Activated CD4-positive, alpha-beta memory T cell treated with anti-CD3 and anti-CD28 coated beads, Interleukin-2, amount 10 ng/mL, durations not matched to agents 7 days and 5 days (primary cell): ENCODE measurements at regions of chr16 and their contacts with region 1.

Region 1: DNA sequence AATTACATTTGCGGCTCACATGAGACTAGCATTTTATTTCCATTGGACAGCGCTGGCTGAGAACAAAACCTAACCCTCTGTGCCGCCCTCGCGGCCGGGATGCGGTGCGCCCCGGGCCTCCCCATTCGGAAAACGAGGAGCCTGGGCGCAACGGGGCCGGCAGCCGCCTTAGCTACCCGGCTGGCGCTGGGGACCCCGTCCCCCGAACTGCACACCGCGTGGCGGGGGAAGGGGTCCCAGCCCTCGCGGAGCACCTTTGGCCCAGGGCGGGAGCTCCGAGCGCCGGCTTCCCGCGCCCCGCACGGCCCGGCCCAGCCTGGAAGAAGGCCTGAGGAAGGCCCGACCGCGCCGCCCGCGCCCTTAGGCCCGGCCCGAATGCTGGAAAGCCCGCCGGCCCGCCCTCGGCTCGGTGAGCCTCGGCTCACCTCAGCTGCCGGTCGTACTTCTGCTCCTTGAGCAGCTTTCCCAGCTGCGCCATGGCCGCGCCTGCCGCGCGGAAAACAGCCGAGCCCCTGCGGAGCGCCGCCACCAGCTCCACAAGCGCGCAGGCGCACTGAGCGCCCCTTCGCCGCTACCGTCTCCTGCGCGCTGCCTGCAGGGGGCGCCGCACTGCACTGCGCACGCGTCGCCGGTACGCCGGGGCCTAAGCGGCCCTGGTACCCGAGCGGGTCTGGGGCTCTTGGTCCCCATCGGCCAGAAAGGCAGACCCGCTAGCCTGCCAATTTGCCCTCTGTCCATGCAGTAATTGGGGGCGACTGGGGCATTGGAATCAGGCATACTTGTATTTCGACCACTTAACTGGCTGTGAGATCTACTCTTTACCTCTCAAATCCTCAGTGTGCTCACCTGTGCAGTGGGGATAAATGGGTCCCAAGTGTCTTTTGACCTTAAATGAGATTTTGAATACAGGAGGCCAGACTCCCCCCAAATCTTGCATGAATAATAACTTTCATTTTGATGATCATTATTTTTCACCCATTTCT is at the start of gene NAE1:
- DNase-seq: peak; percentile 90
- H3K4me3 Mint-ChIP-seq: peak within 1 kb of the TSS; percentile 73
- H3K27ac Mint-ChIP-seq: peak within 1 kb of the TSS; percentile 63
- H3K4me1 Mint-ChIP-seq: peaks cover 41% of the 10 kb centered on the region
- H3K27me3 Mint-ChIP-seq: no peaks in the 10 kb centered on the region
- total RNA-seq, gene NAE1: 76.5 to 78.2 TPM

Region 2: DNA sequence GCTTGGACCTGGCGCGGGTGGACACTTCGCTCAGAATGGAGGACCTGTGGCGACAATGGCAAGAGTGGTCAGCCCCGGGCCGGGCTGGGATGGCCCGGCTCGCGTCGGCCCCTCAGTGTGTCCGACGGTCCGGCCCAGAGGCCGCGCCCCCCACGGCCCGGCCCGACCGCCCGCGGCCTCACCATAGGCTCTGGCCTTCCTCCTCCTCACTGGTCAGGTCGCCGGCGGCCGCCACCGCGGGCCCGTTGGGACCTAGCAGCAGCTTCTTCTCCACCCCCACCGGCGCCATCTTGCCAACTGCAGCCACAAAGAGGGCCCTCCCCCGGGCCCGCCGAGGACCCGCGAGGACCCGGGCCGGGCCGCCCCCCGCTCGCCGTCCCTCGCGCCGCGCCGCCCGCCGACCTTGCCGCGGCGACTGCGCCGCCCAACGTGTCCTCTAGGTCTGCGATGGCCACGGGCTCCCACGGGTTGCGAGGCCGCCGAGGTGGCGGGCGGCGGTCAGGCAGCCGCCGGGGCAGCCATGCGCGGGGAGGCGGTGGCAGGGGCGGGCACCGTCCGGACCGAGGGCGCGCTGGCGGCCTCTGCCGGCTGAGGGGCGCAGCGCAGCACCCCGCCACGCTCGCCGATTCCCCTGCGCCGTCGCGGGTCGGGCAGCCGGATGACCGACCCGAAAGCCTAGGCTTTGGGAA is 79.3 kb before region 1 on chr16 and contains the start of gene DYNC1LI2:
- CTCF ChIA-PET with region 1: interaction called, 17 read pairs
- POLR2A ChIA-PET with region 1: interaction called, 8 read pairs
- DNase-seq: peak; percentile 82
- H3K4me3 Mint-ChIP-seq: peak within 1 kb of the TSS; percentile 81
- H3K27ac Mint-ChIP-seq: peak within 1 kb of the TSS; percentile 73
- H3K4me1 Mint-ChIP-seq: peaks cover 42% of the 10 kb centered on the region
- H3K27me3 Mint-ChIP-seq: peaks cover 15% of the 10 kb centered on the region
- total RNA-seq, gene DYNC1LI2: 50.1 to 52.9 TPM

Region 3: GRCh38 chr16:66810391-66810790 is 20.3 kb before region 1 on chr16:
- CTCF ChIA-PET with region 1: interaction called, 38 read pairs
- POLR2A ChIA-PET with region 1: interaction called, 3 read pairs
- DNase-seq: no peak
- H3K4me3 Mint-ChIP-seq: no peak overlapping the region
- H3K27ac Mint-ChIP-seq: no peak overlapping the region
- H3K4me1 Mint-ChIP-seq: no peaks in the 10 kb centered on the region
- H3K27me3 Mint-ChIP-seq: no peaks in the 10 kb centered on the region

Region 4: DNA sequence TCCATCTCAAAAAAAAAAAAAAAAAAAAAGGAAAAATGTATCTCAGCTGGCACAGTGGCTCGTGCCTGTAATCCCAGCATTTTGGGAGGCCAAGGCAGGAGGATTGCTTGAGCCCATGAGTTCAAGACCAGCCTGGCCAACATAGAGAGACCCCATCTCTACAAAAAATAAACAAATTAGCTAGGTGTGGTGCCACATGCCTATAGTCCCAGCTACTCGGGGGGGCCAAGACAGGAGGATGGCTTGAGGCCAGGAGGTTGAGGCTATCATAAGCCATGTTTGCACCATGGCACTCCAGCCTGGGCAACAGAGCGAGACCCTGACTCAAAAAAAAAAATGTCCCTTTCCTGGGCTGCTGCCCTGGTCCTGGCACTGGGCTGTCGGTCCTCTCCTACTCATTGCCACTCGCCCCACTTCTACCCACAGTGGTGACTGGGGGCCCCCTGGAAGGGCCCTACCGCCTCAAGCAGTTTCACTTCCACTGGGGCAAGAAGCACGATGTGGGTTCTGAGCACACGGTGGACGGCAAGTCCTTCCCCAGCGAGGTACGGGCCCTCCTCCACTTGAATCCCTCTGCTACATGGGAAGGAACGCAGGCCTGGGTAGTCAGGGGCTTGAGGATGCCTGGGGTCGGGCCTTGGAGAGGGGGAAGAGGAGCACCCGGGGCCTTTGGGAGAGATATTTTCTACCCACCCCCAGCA is 19.6 kb after region 1 on chr16:
- CTCF ChIA-PET with region 1: interaction called, 19 read pairs
- POLR2A ChIA-PET with region 1: no interaction called
- DNase-seq: no peak
- H3K4me3 Mint-ChIP-seq: no peak overlapping the region
- H3K27ac Mint-ChIP-seq: no peak overlapping the region
- H3K4me1 Mint-ChIP-seq: peaks cover 16% of the 10 kb centered on the region
- H3K27me3 Mint-ChIP-seq: peaks cover 13% of the 10 kb centered on the region

Region 5: GRCh38 chr16:66872943-66873684 is 42.4 kb after region 1 on chr16:
- CTCF ChIA-PET with region 1: interaction called, 125 read pairs
- POLR2A ChIA-PET with region 1: interaction called, 37 read pairs
- DNase-seq: peak; percentile 96
- H3K4me3 Mint-ChIP-seq: peak overlapping the region; percentile 72
- H3K27ac Mint-ChIP-seq: peak overlapping the region; percentile 82
- H3K4me1 Mint-ChIP-seq: peaks cover 50% of the 10 kb centered on the region
- H3K27me3 Mint-ChIP-seq: no peaks in the 10 kb centered on the region

Region 6: DNA sequence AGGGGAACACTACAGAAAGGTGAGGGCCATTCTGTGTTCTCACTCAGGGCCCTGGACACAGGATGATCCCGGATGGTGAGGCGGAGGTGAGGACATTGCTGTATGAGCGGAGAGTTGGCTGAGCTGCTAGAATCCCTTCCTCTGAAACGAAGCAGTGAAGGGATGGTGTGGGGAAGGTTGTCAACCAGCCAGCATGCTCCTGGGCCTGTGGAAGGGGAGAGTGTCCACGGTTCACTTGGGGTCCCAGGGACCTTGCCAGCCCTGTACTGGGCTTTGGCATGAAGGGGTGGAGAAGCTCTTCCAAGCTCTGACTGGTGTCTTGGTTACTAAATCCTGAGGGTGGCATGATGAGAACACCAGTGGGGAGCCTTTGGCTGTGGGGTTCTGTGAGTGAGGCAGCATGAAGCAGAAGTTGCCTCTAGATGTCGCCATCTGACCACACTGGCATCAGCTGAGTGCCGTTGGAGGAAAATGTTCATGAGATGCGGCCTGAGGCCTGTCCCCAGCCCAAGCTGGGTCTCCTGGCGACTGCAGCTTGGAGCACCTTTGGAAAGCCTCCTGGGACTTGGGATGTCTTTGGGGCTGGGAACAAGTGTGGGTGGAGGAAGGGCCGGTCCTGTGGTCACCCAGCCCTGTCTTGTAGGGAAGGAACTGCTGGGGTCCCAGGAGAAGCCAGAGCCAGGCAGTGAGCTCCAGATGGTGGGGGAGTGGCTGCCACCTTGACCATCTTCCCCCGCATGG is 64.4 kb after region 1 on chr16:
- CTCF ChIA-PET with region 1: interaction called, 10 read pairs
- POLR2A ChIA-PET with region 1: no interaction called
- DNase-seq: peak; percentile 76
- H3K4me3 Mint-ChIP-seq: no peak overlapping the region
- H3K27ac Mint-ChIP-seq: no peak overlapping the region
- H3K4me1 Mint-ChIP-seq: peaks cover 24% of the 10 kb centered on the region
- H3K27me3 Mint-ChIP-seq: no peaks in the 10 kb centered on the region

Region 7: GRCh38 chr16:67017810-67018488 is 187.2 kb after region 1 on chr16:
- CTCF ChIA-PET with region 1: no interaction called
- POLR2A ChIA-PET with region 1: no interaction called
- DNase-seq: peak; percentile 91
- H3K4me3 Mint-ChIP-seq: no peak overlapping the region
- H3K27ac Mint-ChIP-seq: peak overlapping the region; percentile 57
- H3K4me1 Mint-ChIP-seq: peaks cover 41% of the 10 kb centered on the region
- H3K27me3 Mint-ChIP-seq: no peaks in the 10 kb centered on the region